ENCODE measurements at regions of chr3 and their contacts with region 1.

Region 1: GRCh38 chr3:112293368-112294321 is at the start of gene SLC9C1:
- DNase-seq: peak; percentile 15
- H3K4me3 ChIP-seq: peak within 1 kb of the TSS; percentile 15
- H3K27me3 ChIP-seq: no peaks in the 10 kb centered on the region
- CTCF ChIP-seq: peak; percentile 70
- polyA plus RNA-seq, gene SLC9C1: not detected in 2 replicates

Region 2: GRCh38 chr3:112233081-112233480 is 60.6 kb before region 1 on chr3:
- CTCF ChIA-PET with region 1: no interaction called
- POLR2A ChIA-PET with region 1: no interaction called
- DNase-seq: no peak
- H3K4me3 ChIP-seq: no peak overlapping the region
- H3K27me3 ChIP-seq: 0 out of 2 replicates have a peak, but pooled peaks cover 2% of the 10 kb centered on the region
- CTCF ChIP-seq: no peak

Region 3: GRCh38 chr3:112273536-112273935 is 20.1 kb before region 1 on chr3:
- CTCF ChIA-PET with region 1: interaction called, 10 read pairs
- POLR2A ChIA-PET with region 1: interaction called, 3 read pairs
- DNase-seq: no peak
- H3K4me3 ChIP-seq: no peak overlapping the region
- H3K27me3 ChIP-seq: no peaks in the 10 kb centered on the region
- CTCF ChIP-seq: no peak

Region 4: DNA sequence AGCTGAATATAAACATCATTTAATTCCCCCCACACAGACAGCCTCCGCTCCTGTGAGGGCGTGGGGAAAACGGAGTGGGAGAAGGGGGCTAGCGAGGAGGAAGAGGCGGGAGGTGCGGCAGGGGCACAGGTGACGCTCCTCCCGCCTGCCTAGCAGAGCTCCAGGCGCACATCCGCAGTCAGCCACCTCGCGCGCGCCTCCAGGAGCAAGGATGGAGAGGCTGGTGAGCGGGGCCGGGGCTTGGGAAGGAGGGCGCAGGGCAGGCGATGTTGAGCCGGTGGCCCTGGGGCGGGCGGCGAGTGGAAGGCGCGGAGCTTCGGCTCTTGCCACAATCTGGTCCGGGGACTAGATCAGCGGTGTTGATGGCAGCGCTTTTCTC is 39.3 kb after region 1 on chr3 and contains the start of gene CD200:
- CTCF ChIA-PET with region 1: interaction called, 13 read pairs
- POLR2A ChIA-PET with region 1: no interaction called
- DNase-seq: no peak
- H3K4me3 ChIP-seq: peak within 1 kb of the TSS; percentile 25
- H3K27me3 ChIP-seq: peaks cover 18% of the 10 kb centered on the region
- CTCF ChIP-seq: no peak
- polyA plus RNA-seq, gene CD200: 0.10 and 0.12 TPM in 2 replicates

Region 5: GRCh38 chr3:112489674-112490479 is 196.2 kb after region 1 on chr3:
- CTCF ChIA-PET with region 1: no interaction called
- POLR2A ChIA-PET with region 1: no interaction called
- DNase-seq: no peak
- H3K4me3 ChIP-seq: no peak overlapping the region
- H3K27me3 ChIP-seq: no peaks in the 10 kb centered on the region
- CTCF ChIP-seq: no peak

Region 6: GRCh38 chr3:112519424-112520001 is 225.9 kb after region 1 on chr3:
- CTCF ChIA-PET with region 1: interaction called, 36 read pairs
- POLR2A ChIA-PET with region 1: no interaction called
- DNase-seq: peak; percentile 4
- H3K4me3 ChIP-seq: no peak overlapping the region
- H3K27me3 ChIP-seq: no peaks in the 10 kb centered on the region
- CTCF ChIP-seq: peak; percentile 72

Region 7: GRCh38 chr3:112734718-112735350 is 441.2 kb after region 1 on chr3:
- CTCF ChIA-PET with region 1: no interaction called
- POLR2A ChIA-PET with region 1: no interaction called
- DNase-seq: no peak
- H3K4me3 ChIP-seq: no peak overlapping the region
- H3K27me3 ChIP-seq: no peaks in the 10 kb centered on the region
- CTCF ChIP-seq: peak; percentile 77

Region 8: DNA sequence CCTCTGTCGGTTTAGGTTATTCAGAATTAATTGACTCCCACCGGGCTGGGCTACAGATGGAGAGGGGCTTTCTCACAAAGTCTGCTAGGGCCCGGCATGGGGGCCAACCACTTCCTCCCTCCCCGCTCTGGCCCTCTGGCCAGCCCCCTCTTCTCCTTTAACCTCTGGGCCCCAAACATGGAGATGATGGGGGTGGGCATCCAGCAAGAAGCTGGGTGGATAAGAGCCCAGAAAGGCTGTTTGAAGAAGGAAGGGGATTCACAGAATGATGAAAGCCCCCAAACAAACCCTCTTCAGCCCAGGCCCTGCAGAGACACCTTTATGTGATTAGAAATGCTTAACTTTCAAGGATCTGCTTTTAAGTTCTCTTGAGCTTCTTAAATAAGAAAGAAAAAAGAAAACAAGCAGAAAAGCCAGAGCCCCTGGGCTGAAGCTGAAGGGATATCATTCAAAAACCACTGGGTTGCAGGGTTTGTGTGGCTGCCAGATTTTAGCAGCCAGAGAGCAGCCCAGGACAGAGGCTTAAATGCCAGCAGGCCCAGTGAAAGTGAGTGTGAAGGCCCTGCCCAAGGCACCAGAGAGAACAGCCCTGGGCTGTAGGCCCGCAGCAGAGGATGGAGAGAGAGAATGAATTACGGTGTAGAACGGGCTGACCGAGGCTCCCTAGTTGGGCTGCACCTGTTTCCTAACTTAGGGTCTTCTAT is 811.3 kb after region 1 on chr3:
- CTCF ChIA-PET with region 1: no interaction called
- POLR2A ChIA-PET with region 1: no interaction called
- DNase-seq: no peak
- H3K4me3 ChIP-seq: no peak overlapping the region
- H3K27me3 ChIP-seq: no peaks in the 10 kb centered on the region; the same call in 1 of the 2 replicates
- CTCF ChIP-seq: no peak